MCF 10A (cell line): ENCODE measurements at regions of chr1 and their contacts with region 1.

Region 1: GRCh38 chr1:41282679-41283317 is 40.7 kb upstream of the SCMH1 start:
- DNase-seq: peak; percentile 31
- H3K4me3 Mint-ChIP-seq: no peak overlapping the region
- H3K27ac Mint-ChIP-seq: no peak overlapping the region
- H3K4me1 Mint-ChIP-seq: peaks cover 5% of the 10 kb centered on the region
- H3K27me3 Mint-ChIP-seq: peaks cover 22% of the 10 kb centered on the region
- CTCF ChIP-seq: peak; percentile 87

Region 2: GRCh38 chr1:40612345-40612831 is 670.4 kb before region 1 on chr1:
- CTCF ChIA-PET with region 1: no interaction called
- POLR2A ChIA-PET with region 1: no interaction called
- intact Hi-C with region 1: no loop called
- DNase-seq: peak; percentile 78
- H3K4me3 Mint-ChIP-seq: no peak overlapping the region
- H3K27ac Mint-ChIP-seq: no peak overlapping the region
- H3K4me1 Mint-ChIP-seq: peaks cover 12% of the 10 kb centered on the region
- H3K27me3 Mint-ChIP-seq: no peaks in the 10 kb centered on the region
- CTCF ChIP-seq: peak; percentile 89

Region 3: GRCh38 chr1:41268154-41268770 is 14.5 kb before region 1 on chr1:
- CTCF ChIA-PET with region 1: interaction called, 14 read pairs
- POLR2A ChIA-PET with region 1: interaction called, 4 read pairs
- intact Hi-C with region 1: no loop called
- DNase-seq: peak; percentile 72
- H3K4me3 Mint-ChIP-seq: no peak overlapping the region
- H3K27ac Mint-ChIP-seq: no peak overlapping the region
- H3K4me1 Mint-ChIP-seq: peaks cover 6% of the 10 kb centered on the region
- H3K27me3 Mint-ChIP-seq: no peaks in the 10 kb centered on the region
- CTCF ChIP-seq: peak; percentile 93

Region 4: GRCh38 chr1:41313661-41314131 is 30.9 kb after region 1 on chr1:
- CTCF ChIA-PET with region 1: interaction called, 11 read pairs
- POLR2A ChIA-PET with region 1: no interaction called
- intact Hi-C with region 1: no loop called
- DNase-seq: peak; percentile 14
- H3K4me3 Mint-ChIP-seq: no peak overlapping the region
- H3K27ac Mint-ChIP-seq: no peak overlapping the region
- H3K4me1 Mint-ChIP-seq: peaks cover 10% of the 10 kb centered on the region
- H3K27me3 Mint-ChIP-seq: no peaks in the 10 kb centered on the region
- CTCF ChIP-seq: peak; percentile 26

Region 5: DNA sequence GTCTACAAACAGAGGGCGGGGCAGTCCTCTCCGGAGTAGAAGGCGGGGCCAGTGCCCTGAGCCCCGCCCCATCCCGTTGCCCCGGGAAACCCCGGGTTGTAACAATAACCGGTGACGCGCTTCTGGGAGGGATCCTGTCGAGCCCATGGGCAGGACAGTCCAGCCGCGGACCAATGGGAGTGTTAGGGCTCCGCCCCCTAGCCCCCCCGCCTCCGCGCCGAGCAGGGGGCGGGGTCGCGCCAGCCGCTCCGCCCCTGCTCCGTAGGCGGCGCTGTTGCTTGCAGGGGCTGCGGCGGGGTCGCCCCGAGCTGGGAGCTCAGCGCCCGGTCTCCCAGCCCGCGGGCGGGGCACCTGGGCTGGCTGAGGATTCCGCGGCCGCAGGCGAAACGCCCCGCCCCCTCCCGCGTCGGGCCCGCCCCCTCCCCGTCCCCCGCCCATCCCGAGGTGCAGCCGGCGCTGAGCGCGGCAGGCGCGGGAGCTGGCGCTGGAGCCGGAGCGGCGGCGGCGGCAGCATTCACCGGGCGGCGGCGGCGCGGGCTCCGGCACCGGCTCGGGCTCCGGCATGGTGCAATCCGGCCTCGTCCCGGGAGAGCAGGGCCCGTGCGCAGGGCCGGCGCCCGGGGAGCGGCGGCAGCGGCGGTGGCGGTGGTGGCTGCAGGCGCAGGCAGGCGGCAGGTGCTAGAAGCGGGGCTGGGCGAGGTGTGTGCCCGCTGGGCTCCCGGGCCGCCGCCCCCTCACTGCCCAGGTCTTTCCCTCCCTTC is 78.4 kb after region 1 on chr1 and contains the start of gene FOXO6:
- CTCF ChIA-PET with region 1: interaction called, 12 read pairs
- POLR2A ChIA-PET with region 1: no interaction called
- intact Hi-C with region 1: no loop called
- DNase-seq: peak; percentile 98
- H3K4me3 Mint-ChIP-seq: peak within 1 kb of the TSS; percentile 28
- H3K27ac Mint-ChIP-seq: no peak within 1 kb of the TSS
- H3K4me1 Mint-ChIP-seq: peaks cover 35% of the 10 kb centered on the region
- H3K27me3 Mint-ChIP-seq: peaks cover 15% of the 10 kb centered on the region
- CTCF ChIP-seq: peak; percentile 10
- total RNA-seq, gene FOXO6: 0.22 and 0.28 TPM in 2 replicates

Region 6: DNA sequence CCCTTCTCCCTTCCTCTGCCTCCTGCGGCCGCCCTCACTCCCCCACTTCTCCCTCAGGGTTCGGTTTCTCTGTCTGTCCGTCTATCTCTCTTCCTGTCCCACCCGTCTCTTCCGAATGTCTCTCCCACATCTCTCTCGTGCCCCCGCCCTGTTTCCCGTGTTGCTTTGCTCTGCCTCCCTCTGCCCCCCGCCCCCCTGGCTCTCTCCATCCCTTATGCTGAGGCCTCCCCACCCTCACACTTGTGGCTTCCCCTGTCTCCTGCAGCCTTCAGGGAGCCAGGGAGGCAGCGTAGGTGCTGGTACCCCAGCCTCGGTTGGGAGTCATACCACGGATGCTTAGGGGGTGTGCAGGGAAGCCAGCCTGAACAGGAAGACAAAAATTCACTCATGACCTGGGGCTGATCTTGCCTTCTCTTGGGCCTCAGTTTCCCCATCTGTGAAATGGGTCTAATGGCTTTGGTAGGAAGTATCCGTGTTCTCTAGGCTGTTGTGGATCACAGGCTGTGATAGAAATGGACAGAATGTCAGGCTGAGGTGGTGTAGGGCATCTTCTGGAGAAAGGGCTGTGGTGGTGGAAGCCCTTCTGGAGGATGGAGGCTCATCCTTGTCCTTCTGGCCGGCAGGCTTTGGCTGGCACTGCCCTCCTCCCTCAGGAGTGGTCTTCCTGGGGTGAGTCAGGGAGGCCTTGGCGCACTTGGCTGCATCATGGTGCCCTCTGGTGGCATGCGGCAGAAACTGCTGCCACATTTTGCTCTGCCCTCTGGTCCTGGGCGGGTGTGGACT is 133.9 kb after region 1 on chr1:
- CTCF ChIA-PET with region 1: interaction called, 149 read pairs
- POLR2A ChIA-PET with region 1: interaction called, 7 read pairs
- intact Hi-C with region 1: loop called (anchors 1 kb)
- DNase-seq: peak; percentile 74
- H3K4me3 Mint-ChIP-seq: no peak overlapping the region
- H3K27ac Mint-ChIP-seq: peak overlapping the region; percentile 42
- H3K4me1 Mint-ChIP-seq: peaks cover 31% of the 10 kb centered on the region
- H3K27me3 Mint-ChIP-seq: no peaks in the 10 kb centered on the region
- CTCF ChIP-seq: peak; percentile 88

Region 7: GRCh38 chr1:41516168-41517061 is 233.6 kb after region 1 on chr1:
- CTCF ChIA-PET with region 1: interaction called, 7 read pairs
- POLR2A ChIA-PET with region 1: no interaction called
- intact Hi-C with region 1: loop called (anchors 5 kb)
- DNase-seq: peak; percentile 84
- H3K4me3 Mint-ChIP-seq: peak overlapping the region; percentile 32
- H3K27ac Mint-ChIP-seq: no peak overlapping the region
- H3K4me1 Mint-ChIP-seq: peaks cover 21% of the 10 kb centered on the region
- H3K27me3 Mint-ChIP-seq: no peaks in the 10 kb centered on the region
- CTCF ChIP-seq: peak; percentile 84

Region 8: GRCh38 chr1:41618091-41618825 is 335.5 kb after region 1 on chr1:
- CTCF ChIA-PET with region 1: no interaction called
- POLR2A ChIA-PET with region 1: no interaction called
- intact Hi-C with region 1: no loop called
- DNase-seq: peak; percentile 84
- H3K4me3 Mint-ChIP-seq: no peak overlapping the region
- H3K27ac Mint-ChIP-seq: peak overlapping the region; percentile 92
- H3K4me1 Mint-ChIP-seq: peaks cover 55% of the 10 kb centered on the region
- H3K27me3 Mint-ChIP-seq: no peaks in the 10 kb centered on the region
- CTCF ChIP-seq: no peak